Posterior vena cava (tissue), 2 donors: ENCODE measurements at regions of chr9 and their contacts with region 1.

Region 1: GRCh38 chr9:71249729-71250317 is 128.4 kb upstream of the TRPM3 start:
- DNase-seq: no peak

Region 2: GRCh38 chr9:70639853-70640814 is 609.7 kb before region 1 on chr9:
- intact Hi-C with region 1: loop called (anchors 5 to 10 kb)
- DNase-seq: no peak

Region 3: GRCh38 chr9:70924895-70925547 is 324.8 kb before region 1 on chr9:
- intact Hi-C with region 1: loop called in 1 of 2 experiments (anchors 5 kb)
- DNase-seq: no peak